B cell (primary cell): ENCODE measurements at regions of chr2 and their contacts with region 1.

Region 1: GRCh38 chr2:44167940-44168680 is 565 bp upstream of the PPM1B start:
- DNase-seq: peak; percentile 99
- ATAC-seq: peak; percentile 77
- H3K4me3 ChIP-seq: peak overlapping the region; percentile 68 to 96 (median 87)
- H3K4me3 Mint-ChIP-seq: peak overlapping the region; percentile 96
- H3K27ac ChIP-seq: peak overlapping the region; percentile 98 to 100
- H3K27ac Mint-ChIP-seq: peak overlapping the region; percentile 96
- H3K4me1 ChIP-seq: peaks cover 25 to 29% of the 10 kb centered on the region in 2 donors
- H3K4me1 Mint-ChIP-seq: peaks cover 26% of the 10 kb centered on the region
- H3K27me3 ChIP-seq: no peaks in the 10 kb centered on the region
- H3K27me3 Mint-ChIP-seq: no peaks in the 10 kb centered on the region
- CTCF ChIP-seq: no peak

Region 2: GRCh38 chr2:43595603-43596412 is 572.3 kb before region 1 on chr2 and contains the start of gene THADA:
- CTCF ChIA-PET with region 1: no interaction called
- POLR2A ChIA-PET with region 1: no interaction called
- intact Hi-C with region 1: loop called (anchors 5 kb)
- DNase-seq: peak; percentile 98
- ATAC-seq: peak; percentile 98
- H3K4me3 ChIP-seq: peak within 1 kb of the TSS; percentile 69 to 94 (median 80)
- H3K4me3 Mint-ChIP-seq: peak within 1 kb of the TSS; percentile 98
- H3K27ac ChIP-seq: peak within 1 kb of the TSS; percentile 94
- H3K27ac Mint-ChIP-seq: peak within 1 kb of the TSS; percentile 96
- H3K4me1 ChIP-seq: peaks cover 12 to 21% of the 10 kb centered on the region in 2 donors
- H3K4me1 Mint-ChIP-seq: peaks cover 24% of the 10 kb centered on the region
- H3K27me3 ChIP-seq: no peaks in the 10 kb centered on the region
- H3K27me3 Mint-ChIP-seq: peaks cover 3% of the 10 kb centered on the region
- CTCF ChIP-seq: no peak
- total RNA-seq, gene THADA: 48.5 and 53.7 TPM in 2 replicates

Region 3: DNA sequence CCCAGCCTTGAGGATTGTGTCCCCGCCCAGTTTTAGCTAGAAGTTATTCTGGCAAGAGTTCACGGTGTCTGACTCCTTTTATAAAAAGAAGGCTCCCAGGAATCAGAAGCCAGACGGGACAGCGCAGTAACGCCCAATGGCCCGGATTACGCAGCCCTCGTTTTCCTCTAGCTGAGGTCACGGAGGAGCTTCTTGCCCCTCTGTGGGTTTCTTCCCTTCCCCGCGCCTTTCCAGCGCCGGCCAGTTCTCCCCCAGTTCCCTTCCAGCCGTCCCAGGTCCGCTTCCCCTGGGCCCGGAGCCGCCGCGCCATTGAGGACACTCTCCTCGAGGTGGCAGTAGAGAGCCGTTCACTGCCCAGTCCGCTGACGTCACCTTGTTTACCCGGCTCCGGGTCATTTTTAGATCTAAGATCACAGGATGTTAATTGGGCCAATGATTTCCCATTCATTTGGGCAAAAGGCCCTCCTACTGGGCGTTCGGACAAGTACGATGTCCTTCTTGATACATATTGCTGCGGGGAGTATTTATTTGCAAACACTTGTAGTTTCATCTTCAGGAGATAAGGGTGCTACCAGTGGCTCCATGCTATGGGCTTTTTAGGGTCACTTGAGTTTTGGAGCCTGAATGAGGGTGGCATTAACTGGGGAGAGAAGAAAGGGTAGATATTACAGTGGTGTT is 80.9 kb before region 1 on chr2:
- CTCF ChIA-PET with region 1: no interaction called
- POLR2A ChIA-PET with region 1: no interaction called
- intact Hi-C with region 1: loop called (anchors 1 kb)
- DNase-seq: peak; percentile 87
- ATAC-seq: peak; percentile 97
- H3K4me3 ChIP-seq: peak overlapping the region; percentile 43 to 70 (median 57)
- H3K4me3 Mint-ChIP-seq: peak overlapping the region; percentile 66
- H3K27ac ChIP-seq: peak overlapping the region; percentile 44 to 71
- H3K27ac Mint-ChIP-seq: peak overlapping the region; percentile 54
- H3K4me1 ChIP-seq: peaks cover 24 to 32% of the 10 kb centered on the region in 2 donors
- H3K4me1 Mint-ChIP-seq: peaks cover 23% of the 10 kb centered on the region
- H3K27me3 ChIP-seq: no peaks in the 10 kb centered on the region
- H3K27me3 Mint-ChIP-seq: no peaks in the 10 kb centered on the region
- CTCF ChIP-seq: peak; percentile 97

Region 4: DNA sequence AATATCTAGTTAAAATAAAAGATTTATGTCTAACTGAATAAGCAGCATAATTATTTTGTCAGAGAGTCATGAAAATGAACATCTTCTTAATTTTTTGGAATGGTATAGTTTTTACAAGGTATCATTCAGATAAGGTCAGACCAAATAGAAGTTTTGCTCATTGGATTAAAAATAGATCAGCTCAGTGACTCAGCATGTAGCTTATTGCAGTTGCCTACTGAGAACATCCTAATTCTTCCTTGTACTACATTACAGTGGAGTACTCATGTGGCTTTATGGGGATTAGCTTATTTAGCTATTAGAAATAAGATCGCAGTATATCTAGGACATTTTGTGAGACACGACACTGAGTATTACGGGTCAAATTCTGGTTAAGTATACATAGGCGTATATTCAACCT is 37.7 kb before region 1 on chr2:
- CTCF ChIA-PET with region 1: no interaction called
- POLR2A ChIA-PET with region 1: no interaction called
- intact Hi-C with region 1: no loop called
- DNase-seq: no peak
- ATAC-seq: no peak
- H3K4me3 ChIP-seq: no peak overlapping the region
- H3K4me3 Mint-ChIP-seq: no peak overlapping the region
- H3K27ac ChIP-seq: no peak overlapping the region
- H3K27ac Mint-ChIP-seq: no peak overlapping the region
- H3K4me1 ChIP-seq: no peaks in the 10 kb centered on the region
- H3K4me1 Mint-ChIP-seq: no peaks in the 10 kb centered on the region
- H3K27me3 ChIP-seq: peaks cover 0 to 2% (median 0%) of the 10 kb centered on the region in 4 experiments
- H3K27me3 Mint-ChIP-seq: peaks cover 7% of the 10 kb centered on the region
- CTCF ChIP-seq: no peak

Region 5: DNA sequence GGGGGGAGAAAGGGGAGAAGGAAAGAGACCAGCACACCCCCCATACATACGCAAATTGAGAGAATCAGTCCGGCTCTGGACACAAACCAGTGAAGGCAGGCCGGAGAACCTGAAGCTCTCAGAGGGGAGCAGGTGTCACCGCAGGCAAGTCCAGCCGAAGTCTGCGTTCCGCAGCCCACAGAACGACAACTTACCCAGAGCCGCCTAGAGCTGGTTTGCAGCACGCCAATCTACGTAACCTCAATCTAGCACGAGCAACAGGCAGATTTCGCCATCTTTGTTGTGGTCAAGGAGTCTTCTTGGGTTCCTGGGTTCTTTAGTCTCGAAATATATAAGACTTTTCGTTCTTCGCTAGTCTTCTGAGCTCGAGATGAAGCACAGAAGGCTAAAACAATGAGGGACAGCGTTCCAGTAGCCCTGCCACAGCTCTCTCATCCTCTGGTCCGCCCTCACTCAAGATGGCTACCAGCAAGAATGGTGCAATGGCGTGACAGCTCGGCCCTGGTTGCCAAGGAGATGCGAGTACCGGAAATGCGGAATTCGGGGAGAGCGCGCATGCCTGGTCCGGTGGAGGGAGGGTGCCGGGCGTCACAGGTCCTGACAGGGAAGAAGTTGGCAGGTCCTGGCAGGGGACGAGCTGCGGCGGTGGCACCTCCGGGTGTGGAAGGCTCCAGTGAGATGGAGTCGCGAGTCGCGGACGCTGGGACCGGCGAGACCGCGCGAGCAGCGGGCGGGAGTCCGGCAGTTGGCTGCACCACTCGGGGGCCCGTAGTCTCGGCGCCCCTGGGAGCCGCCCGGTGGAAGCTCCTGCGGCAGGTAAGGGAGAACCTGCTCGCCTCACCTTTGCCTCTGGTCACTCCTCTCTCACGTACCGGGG is 193.5 kb after region 1 on chr2 and contains the starts of genes CAMKMT and PREPL:
- CTCF ChIA-PET with region 1: interaction called, 3 read pairs
- POLR2A ChIA-PET with region 1: interaction called, 24 read pairs
- intact Hi-C with region 1: loop called (anchors 1 kb)
- DNase-seq: peak; percentile 99
- ATAC-seq: peak; percentile 86
- H3K4me3 ChIP-seq: peak within 1 kb of the TSS; percentile 80 to 95 (median 88)
- H3K4me3 Mint-ChIP-seq: peak within 1 kb of the TSS; percentile 98
- H3K27ac ChIP-seq: peak within 1 kb of the TSS; percentile 99 to 100
- H3K27ac Mint-ChIP-seq: peak within 1 kb of the TSS; percentile 100
- H3K4me1 ChIP-seq: peaks cover 17 to 20% of the 10 kb centered on the region in 2 donors
- H3K4me1 Mint-ChIP-seq: peaks cover 34% of the 10 kb centered on the region
- H3K27me3 ChIP-seq: no peaks in the 10 kb centered on the region
- H3K27me3 Mint-ChIP-seq: no peaks in the 10 kb centered on the region
- CTCF ChIP-seq: no peak
- total RNA-seq, gene CAMKMT: 23.3 and 26.1 TPM in 2 replicates
- total RNA-seq, gene PREPL: 34.0 and 36.4 TPM in 2 replicates

Region 6: GRCh38 chr2:45611020-45611737 is 1443.1 kb after region 1 on chr2 and contains the start of gene SRBD1:
- CTCF ChIA-PET with region 1: no interaction called
- POLR2A ChIA-PET with region 1: no interaction called
- intact Hi-C with region 1: loop called (anchors 2 kb)
- DNase-seq: peak; percentile 95
- ATAC-seq: peak; percentile 97
- H3K4me3 ChIP-seq: peak within 1 kb of the TSS; percentile 73 to 96 (median 88)
- H3K4me3 Mint-ChIP-seq: peak within 1 kb of the TSS; percentile 95
- H3K27ac ChIP-seq: peak within 1 kb of the TSS; percentile 90 to 93
- H3K27ac Mint-ChIP-seq: peak within 1 kb of the TSS; percentile 93
- H3K4me1 ChIP-seq: peaks cover 13 to 16% of the 10 kb centered on the region in 2 donors
- H3K4me1 Mint-ChIP-seq: peaks cover 26% of the 10 kb centered on the region
- H3K27me3 ChIP-seq: no peaks in the 10 kb centered on the region
- H3K27me3 Mint-ChIP-seq: no peaks in the 10 kb centered on the region
- CTCF ChIP-seq: no peak
- total RNA-seq, gene SRBD1: 27.1 and 27.6 TPM in 2 replicates